ENCODE measurements at regions of chr17 and their contacts with region 1.

Region 1: GRCh38 chr17:49556223-49556971 is 19.3 kb upstream of the NXPH3 start:
- DNase-seq: peak; percentile 88
- ATAC-seq: peak; percentile 98
- H3K4me3 Mint-ChIP-seq: no peak overlapping the region
- H3K27ac Mint-ChIP-seq: peak overlapping the region; percentile 22
- H3K4me1 Mint-ChIP-seq: peaks cover 5% of the 10 kb centered on the region
- H3K27me3 Mint-ChIP-seq: peaks cover 14% of the 10 kb centered on the region

Region 2: DNA sequence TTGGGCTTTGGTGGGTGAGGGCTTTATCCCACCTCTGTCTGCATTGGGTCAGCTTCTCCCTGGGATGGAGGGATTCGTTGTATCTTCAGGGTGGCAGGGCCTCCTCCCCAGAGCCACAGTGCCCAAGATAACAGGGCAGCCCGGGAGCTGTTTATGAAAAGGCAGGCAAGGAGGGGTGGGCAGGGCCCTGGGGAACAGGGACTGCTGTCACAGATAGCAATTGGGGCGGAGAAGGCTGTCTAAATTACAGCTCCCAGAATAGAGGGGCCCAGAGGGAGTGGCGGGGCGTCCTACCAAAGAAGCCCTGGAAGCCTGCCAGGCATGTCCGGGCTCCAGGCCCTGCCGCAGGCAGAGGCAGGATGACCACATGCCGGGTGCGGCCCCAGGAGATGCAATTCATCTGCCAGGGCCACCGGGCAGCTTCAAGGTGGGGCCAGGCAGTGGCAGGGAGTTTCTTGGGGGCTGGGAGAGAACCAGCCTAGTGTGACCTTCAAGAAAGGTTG is 307.1 kb before region 1 on chr17:
- CTCF ChIA-PET with region 1: no interaction called
- DNase-seq: no peak
- ATAC-seq: no peak
- H3K4me3 Mint-ChIP-seq: no peak overlapping the region
- H3K27ac Mint-ChIP-seq: no peak overlapping the region
- H3K4me1 Mint-ChIP-seq: no peaks in the 10 kb centered on the region
- H3K27me3 Mint-ChIP-seq: peaks cover 9% of the 10 kb centered on the region

Region 3: DNA sequence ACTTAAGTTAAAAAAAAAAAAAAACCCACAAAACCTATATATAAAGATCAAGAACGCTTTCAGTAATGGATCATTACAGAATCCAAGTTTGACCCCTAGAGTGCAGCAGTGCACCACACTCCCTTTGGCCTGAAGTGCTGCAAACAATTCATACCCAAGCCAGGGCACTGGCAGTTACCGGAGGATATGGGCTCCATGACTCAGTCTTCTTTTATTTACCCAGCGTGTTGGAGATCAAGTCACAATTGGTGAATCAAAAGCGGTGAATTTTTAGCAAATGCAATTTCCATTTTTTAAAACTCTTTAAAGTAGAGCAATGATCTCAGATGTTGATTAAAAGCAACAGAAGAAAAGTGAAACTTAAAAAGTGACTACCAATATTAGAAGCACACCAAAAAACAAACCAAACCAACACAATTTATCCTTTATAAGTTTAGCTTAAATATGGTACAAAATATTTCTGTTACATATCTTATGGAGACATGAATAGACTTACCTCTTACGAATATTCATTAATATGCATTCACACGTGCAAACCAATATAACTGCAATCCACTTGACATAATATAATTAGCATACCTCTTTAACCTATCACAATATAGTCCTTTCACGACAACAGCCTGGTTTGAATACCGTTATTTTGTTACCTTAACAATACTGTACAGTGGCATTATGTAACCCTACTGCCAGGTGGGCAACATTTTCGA is 240.7 kb before region 1 on chr17:
- CTCF ChIA-PET with region 1: interaction called, 24 read pairs
- DNase-seq: peak; percentile 90
- ATAC-seq: peak; percentile 100
- H3K4me3 Mint-ChIP-seq: peak overlapping the region; percentile 65
- H3K27ac Mint-ChIP-seq: peak overlapping the region; percentile 68
- H3K4me1 Mint-ChIP-seq: peaks cover 38% of the 10 kb centered on the region
- H3K27me3 Mint-ChIP-seq: no peaks in the 10 kb centered on the region

Region 4: GRCh38 chr17:49414622-49415350 is 141.6 kb before region 1 on chr17 and contains the start of gene PHB1:
- CTCF ChIA-PET with region 1: interaction called, 196 read pairs
- DNase-seq: peak; percentile 99
- ATAC-seq: peak; percentile 100
- H3K4me3 Mint-ChIP-seq: peak within 1 kb of the TSS; percentile 89
- H3K27ac Mint-ChIP-seq: peak within 1 kb of the TSS; percentile 85
- H3K4me1 Mint-ChIP-seq: peaks cover 26% of the 10 kb centered on the region
- H3K27me3 Mint-ChIP-seq: peaks cover 10% of the 10 kb centered on the region
- total RNA-seq, gene PHB1: 150 to 227 TPM

Region 5: GRCh38 chr17:49496183-49496866 is 60.1 kb before region 1 on chr17:
- CTCF ChIA-PET with region 1: interaction called, 23 read pairs
- DNase-seq: peak; percentile 86
- ATAC-seq: peak; percentile 85
- H3K4me3 Mint-ChIP-seq: peak overlapping the region; percentile 52
- H3K27ac Mint-ChIP-seq: no peak overlapping the region
- H3K4me1 Mint-ChIP-seq: peaks cover 22% of the 10 kb centered on the region
- H3K27me3 Mint-ChIP-seq: peaks cover 80% of the 10 kb centered on the region

Region 6: DNA sequence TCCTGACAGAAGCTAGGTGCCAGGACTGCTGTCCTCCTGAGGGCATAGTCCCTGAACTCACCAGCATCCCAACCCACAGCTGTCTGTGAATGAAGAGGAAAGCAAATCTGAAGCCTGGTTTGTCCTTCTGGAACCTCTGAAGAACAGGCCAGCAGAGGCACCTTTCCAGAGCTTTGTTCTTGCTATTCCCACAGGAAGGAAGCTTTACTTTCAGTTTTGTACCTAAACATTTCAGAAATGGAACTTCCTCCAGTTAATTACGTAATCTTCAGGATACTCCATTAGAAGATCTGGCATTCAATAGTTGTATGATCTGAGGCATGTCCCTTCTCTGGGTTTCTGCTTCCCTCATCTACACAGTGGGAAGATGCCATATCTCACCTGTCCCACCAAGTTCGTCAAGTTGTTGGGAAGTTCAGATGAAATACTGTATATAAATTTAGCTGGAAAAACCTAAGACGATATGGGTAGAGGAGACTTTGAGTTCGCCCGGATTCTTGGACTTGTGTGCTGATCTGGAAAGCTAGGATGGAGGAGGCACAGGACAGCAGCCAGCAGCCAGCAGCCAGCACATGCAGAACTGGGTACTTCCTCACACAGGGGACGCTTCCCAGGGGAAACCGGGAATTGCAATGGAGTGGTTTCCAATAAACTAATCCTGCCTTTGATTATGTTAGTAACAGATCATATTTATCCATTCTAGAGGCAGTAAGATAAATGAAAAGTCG is 41.7 kb after region 1 on chr17:
- CTCF ChIA-PET with region 1: interaction called, 12 read pairs
- DNase-seq: no peak
- ATAC-seq: no peak
- H3K4me3 Mint-ChIP-seq: no peak overlapping the region
- H3K27ac Mint-ChIP-seq: no peak overlapping the region
- H3K4me1 Mint-ChIP-seq: peaks cover 5% of the 10 kb centered on the region
- H3K27me3 Mint-ChIP-seq: no peaks in the 10 kb centered on the region

Region 7: DNA sequence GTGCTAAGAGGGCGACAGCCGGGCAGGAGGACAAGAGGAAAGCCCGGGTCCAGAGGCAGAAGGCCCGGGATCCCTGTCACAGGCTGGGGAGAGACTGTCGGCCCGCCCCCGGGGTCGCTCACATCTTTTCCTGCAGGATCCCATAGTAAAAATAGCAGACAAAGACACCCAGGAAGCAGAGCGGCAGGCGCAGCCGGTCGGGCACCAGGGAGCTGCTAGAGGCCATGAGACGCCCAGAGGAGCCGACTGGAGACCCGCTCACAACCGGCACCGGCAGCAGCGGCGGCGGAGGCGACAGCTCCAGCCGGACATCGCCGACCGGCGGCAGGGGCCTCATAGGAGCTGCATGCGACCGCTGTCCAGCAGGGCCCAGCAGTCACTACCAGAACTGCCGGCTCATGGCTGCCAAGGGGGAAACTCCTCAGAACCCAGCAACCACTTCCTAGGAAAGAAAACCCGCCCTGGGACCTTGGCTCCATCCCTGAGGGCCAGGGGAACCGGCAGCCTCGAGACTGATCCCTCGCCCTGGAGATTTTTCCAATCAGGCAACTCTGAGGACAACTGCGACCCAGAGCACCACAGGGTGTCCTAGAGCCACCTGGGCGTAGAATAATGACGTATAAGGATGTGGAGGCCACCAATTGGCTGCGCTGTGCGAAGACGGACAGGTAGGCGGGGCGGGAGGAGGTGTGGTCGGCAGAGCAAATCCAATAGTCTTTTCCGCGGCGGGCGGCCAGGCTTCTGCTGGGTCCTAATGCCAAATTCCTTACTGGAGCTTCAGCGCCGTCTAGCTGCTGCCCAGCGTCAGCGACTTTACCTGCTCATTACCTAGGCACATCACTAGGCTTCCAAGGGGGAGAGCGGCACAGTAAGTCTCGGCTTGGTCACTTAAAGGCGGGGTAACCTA is 151.5 kb after region 1 on chr17 and contains the start of gene SLC35B1:
- CTCF ChIA-PET with region 1: interaction called, 24 read pairs
- DNase-seq: peak; percentile 99
- ATAC-seq: peak; percentile 99
- H3K4me3 Mint-ChIP-seq: peak within 1 kb of the TSS; percentile 89
- H3K27ac Mint-ChIP-seq: peak within 1 kb of the TSS; percentile 96
- H3K4me1 Mint-ChIP-seq: peaks cover 45% of the 10 kb centered on the region
- H3K27me3 Mint-ChIP-seq: no peaks in the 10 kb centered on the region
- total RNA-seq, gene SLC35B1: 47.3 to 78.1 TPM